ENCODE measurements at regions of chr4 and their contacts with region 1.

Region 1: DNA sequence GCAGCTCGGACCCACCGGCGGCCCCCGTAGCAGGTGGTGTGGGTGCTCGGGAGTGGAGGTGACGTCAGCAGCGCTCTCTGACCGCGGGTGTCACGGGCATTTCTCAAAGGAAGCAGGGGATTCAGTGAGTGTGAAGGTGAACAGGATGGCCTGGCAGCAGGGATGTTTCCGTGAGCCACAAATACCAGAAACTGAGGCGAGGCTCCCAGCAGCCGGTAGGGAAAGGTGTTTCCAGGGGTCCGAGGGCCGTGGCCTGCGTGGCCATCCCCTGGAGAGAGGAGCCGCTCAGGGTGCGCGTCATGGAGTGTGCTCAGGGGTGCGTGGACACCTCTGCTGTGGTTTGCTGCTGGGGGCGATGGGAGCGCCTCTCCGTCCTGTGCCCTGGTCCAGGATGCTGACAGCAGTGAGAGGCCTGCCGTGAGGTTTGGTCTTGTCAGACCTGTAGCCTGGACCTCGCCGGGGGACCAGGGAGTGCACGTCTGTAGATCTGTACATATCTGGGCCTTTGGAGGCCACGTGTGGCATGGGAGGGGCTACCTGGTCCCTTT is 10.2 kb upstream of the HGFAC start:
- DNase-seq: no peak
- ATAC-seq: no peak
- H3K4me3 ChIP-seq: no peak overlapping the region
- H3K27ac ChIP-seq: no peak overlapping the region
- H3K4me1 ChIP-seq: no peaks in the 10 kb centered on the region
- H3K27me3 ChIP-seq: no peaks in the 10 kb centered on the region
- CTCF ChIP-seq: no peak
- POLR2A ChIP-seq: no peak

Region 2: DNA sequence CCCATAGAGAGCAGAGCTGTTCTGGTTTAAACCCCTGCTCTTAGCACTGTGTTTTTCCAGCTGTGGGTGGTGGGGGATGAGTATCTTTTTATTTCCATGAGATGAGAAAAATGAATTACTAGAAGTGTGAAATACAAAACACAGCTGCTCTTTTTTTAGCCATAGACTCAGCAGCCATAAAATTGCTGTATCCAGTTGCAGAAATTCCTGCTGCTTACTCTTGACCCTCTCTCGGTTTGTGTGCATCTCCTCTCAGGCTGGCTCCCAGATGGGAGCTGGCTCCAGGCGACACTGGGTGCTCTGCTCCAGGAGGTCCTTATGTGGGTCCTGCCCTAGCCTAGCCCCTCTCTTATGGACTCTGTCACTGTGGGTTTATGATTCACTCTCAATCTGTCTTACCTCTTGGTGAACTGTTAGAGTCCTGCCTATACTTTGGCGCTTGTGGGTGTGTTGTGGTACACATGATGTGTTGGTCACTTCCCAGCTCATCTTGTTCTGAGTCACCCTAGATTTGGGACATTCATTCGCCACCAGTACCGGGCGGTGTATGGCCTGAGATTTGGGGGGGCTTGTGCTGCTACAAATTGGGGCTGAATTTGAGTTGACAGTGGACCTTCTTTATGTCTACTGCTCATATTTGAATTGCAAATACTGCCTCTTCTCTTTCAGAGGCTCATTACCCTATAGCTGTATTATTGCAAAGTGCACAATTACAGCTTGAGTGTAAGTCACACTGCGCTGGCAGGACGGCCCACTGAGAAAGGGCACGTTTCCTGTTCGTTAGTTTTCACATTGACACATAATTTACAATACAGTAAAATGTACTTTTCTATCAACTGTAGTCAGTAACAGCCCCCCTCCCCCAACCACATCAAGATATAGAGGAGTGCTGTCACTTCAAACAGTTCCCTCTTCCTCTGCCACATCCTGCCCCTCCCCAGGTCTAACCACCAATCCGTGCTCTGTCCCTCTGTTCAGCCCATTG is 229.5 kb before region 1 on chr4:
- intact Hi-C with region 1: no loop called
- DNase-seq: no peak
- ATAC-seq: peak in 3 of 4 donors; percentile 13 to 39 (median 15)
- H3K4me3 ChIP-seq: no peak overlapping the region
- H3K27ac ChIP-seq: peak overlapping the region in 2 of 12 donors; percentile 66 to 75
- H3K4me1 ChIP-seq: peaks cover 0 to 41% (median 0%) of the 10 kb centered on the region in 12 donors
- H3K27me3 ChIP-seq: no peaks in the 10 kb centered on the region
- CTCF ChIP-seq: no peak
- POLR2A ChIP-seq: no peak

Region 3: DNA sequence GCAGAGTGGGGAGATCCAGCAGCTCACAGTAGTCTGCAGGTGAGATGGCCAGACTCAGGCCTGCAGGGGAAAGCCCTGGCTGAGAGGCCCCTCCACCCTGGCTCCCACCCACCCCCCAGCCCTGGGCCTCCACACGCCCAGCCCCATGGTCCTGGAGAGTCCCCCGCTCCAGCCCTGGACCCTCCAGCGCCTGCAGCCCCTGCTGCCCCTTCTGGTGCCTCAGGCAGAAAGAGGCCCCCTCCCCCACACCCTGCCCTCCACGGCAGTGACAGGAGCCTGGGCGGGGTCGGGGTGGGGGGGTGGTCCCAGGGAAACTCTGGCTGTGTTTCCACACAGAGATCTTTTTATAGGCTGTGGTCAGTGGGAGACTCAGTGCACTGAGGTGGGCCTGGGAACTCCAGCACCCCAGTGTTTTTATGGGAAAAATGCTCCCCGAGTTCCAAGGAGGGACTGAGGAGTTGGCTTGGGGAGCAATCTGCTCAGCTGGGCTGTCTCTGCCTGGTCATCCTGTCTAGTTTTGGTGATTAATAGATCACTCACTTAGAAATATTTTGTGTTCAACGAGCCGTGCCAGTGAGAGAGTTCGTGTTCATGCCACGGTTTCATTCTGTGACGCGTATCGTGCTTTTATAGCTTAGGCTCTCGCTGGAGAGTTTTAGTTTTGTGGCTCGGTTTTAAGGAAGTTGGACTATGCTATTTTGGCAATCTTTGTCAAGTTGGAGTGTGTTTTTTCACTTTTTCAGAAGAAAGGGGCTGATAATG is 42.9 kb before region 1 on chr4:
- intact Hi-C with region 1: loop called in 1 of 10 experiments (anchors 2 kb)
- DNase-seq: peak in 1 of 5 donors; percentile 65
- ATAC-seq: peak in 2 of 4 donors; percentile 8 to 35
- H3K4me3 ChIP-seq: peak overlapping the region in 10 of 12 donors; percentile 18 to 45 (median 40)
- H3K27ac ChIP-seq: peak overlapping the region; percentile 24 to 97 (median 65)
- H3K4me1 ChIP-seq: peaks cover 0 to 56% (median 33%) of the 10 kb centered on the region in 12 donors
- H3K27me3 ChIP-seq: no peaks in the 10 kb centered on the region
- CTCF ChIP-seq: no peak
- POLR2A ChIP-seq: no peak

Measured in heart left ventricle (tissue), 16 donors.